Naive thymus-derived CD4-positive, alpha-beta T cell (primary cell): ENCODE measurements at regions of chr4 and their contacts with region 1.

Region 1: DNA sequence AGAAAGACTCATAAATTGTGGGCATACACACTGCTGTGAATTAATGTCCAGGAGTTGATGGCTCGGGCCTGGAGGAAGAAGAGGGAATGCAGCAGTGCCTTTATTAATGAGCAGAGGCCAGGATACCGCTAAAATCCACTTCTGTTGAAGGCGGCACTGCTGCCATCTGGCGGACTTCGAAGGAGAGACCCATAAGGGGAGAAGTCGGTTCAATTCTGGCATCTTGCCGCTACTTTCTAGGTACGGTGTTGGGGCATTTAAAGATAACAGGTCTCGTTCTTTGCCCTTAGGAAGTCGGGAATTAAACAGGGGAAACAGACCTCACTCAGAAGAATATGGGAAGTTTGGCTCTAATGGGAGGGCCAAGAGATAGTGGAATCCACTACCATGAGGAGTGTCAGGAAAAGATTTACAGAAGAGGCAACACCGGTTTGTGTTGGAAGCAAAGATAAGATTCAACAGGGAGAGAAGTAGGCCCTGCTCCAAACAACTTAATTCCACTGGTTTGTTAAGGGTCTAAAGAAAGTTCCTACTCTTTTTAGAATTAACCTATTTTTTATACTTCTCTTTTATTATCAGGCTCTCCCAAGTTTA is 133.6 kb upstream of the GIMD1 start:
- DNase-seq: peak in 4 of 9 donors; percentile 1 to 28 (median 8)
- ATAC-seq: peak; percentile 46
- H3K4me3 ChIP-seq: no peak overlapping the region
- H3K4me3 Mint-ChIP-seq: no peak overlapping the region
- H3K27ac ChIP-seq: no peak overlapping the region
- H3K27ac Mint-ChIP-seq: no peak overlapping the region
- H3K4me1 ChIP-seq: no peaks in the 10 kb centered on the region
- H3K4me1 Mint-ChIP-seq: peaks cover 0 to 6% (median 0%) of the 10 kb centered on the region in 7 donors
- H3K27me3 ChIP-seq: no peaks in the 10 kb centered on the region
- H3K27me3 Mint-ChIP-seq: peaks cover 11 to 37% (median 22%) of the 10 kb centered on the region in 5 donors

Region 2: DNA sequence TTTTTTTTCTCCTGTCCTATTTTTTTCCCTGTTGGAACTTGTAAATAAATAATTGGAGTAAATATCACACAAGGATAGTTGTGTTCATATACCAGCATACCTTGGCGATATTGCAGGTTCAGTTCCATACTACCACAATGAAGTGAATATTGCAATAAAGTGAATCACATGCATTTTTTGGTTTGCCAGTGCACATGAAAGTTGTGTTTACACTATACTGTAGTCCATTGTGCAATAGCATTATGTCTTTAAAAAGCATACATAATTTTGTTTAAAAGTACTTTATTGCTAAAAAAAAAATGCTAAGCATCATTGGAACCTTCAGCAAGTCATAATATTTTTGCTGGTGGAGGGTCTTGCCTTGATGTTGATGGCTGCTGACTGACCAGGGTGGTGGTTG is 705.0 kb before region 1 on chr4:
- CTCF ChIA-PET with region 1: no interaction called
- POLR2A ChIA-PET with region 1: no interaction called
- intact Hi-C with region 1: no loop called
- DNase-seq: no peak
- ATAC-seq: no peak
- H3K4me3 ChIP-seq: no peak overlapping the region
- H3K4me3 Mint-ChIP-seq: no peak overlapping the region
- H3K27ac ChIP-seq: no peak overlapping the region
- H3K27ac Mint-ChIP-seq: no peak overlapping the region
- H3K4me1 ChIP-seq: no peaks in the 10 kb centered on the region
- H3K4me1 Mint-ChIP-seq: no peaks in the 10 kb centered on the region
- H3K27me3 ChIP-seq: no peaks in the 10 kb centered on the region
- H3K27me3 Mint-ChIP-seq: no peaks in the 10 kb centered on the region

Region 3: GRCh38 chr4:106238820-106239420 is 263.3 kb before region 1 on chr4:
- CTCF ChIA-PET with region 1: no interaction called
- POLR2A ChIA-PET with region 1: no interaction called
- intact Hi-C with region 1: loop called (anchors 1 kb)
- DNase-seq: peak in 3 of 9 donors; percentile 1 to 16 (median 5)
- ATAC-seq: peak; percentile 51
- H3K4me3 ChIP-seq: no peak overlapping the region
- H3K4me3 Mint-ChIP-seq: no peak overlapping the region
- H3K27ac ChIP-seq: no peak overlapping the region
- H3K27ac Mint-ChIP-seq: no peak overlapping the region
- H3K4me1 ChIP-seq: no peaks in the 10 kb centered on the region
- H3K4me1 Mint-ChIP-seq: no peaks in the 10 kb centered on the region
- H3K27me3 ChIP-seq: no peaks in the 10 kb centered on the region
- H3K27me3 Mint-ChIP-seq: no peaks in the 10 kb centered on the region

Region 4: GRCh38 chr4:106369456-106370060 is 132.6 kb before region 1 on chr4:
- CTCF ChIA-PET with region 1: no interaction called
- POLR2A ChIA-PET with region 1: no interaction called
- intact Hi-C with region 1: loop called in 1 of 2 experiments (anchors 1 kb)
- DNase-seq: peak in 5 of 9 donors; percentile 1 to 28 (median 1)
- ATAC-seq: peak; percentile 60
- H3K4me3 ChIP-seq: no peak overlapping the region
- H3K4me3 Mint-ChIP-seq: no peak overlapping the region
- H3K27ac ChIP-seq: no peak overlapping the region
- H3K27ac Mint-ChIP-seq: no peak overlapping the region
- H3K4me1 ChIP-seq: no peaks in the 10 kb centered on the region
- H3K4me1 Mint-ChIP-seq: peaks cover 0 to 5% (median 0%) of the 10 kb centered on the region in 7 donors
- H3K27me3 ChIP-seq: no peaks in the 10 kb centered on the region
- H3K27me3 Mint-ChIP-seq: peaks cover 19 to 31% (median 24%) of the 10 kb centered on the region in 5 donors

Region 5: GRCh38 chr4:106618956-106619355 is 116.8 kb after region 1 on chr4:
- CTCF ChIA-PET with region 1: no interaction called
- POLR2A ChIA-PET with region 1: no interaction called
- intact Hi-C with region 1: no loop called
- DNase-seq: no peak
- ATAC-seq: no peak
- H3K4me3 ChIP-seq: no peak overlapping the region
- H3K4me3 Mint-ChIP-seq: no peak overlapping the region
- H3K27ac ChIP-seq: no peak overlapping the region
- H3K27ac Mint-ChIP-seq: no peak overlapping the region
- H3K4me1 ChIP-seq: no peaks in the 10 kb centered on the region
- H3K4me1 Mint-ChIP-seq: no peaks in the 10 kb centered on the region
- H3K27me3 ChIP-seq: no peaks in the 10 kb centered on the region
- H3K27me3 Mint-ChIP-seq: peaks cover 0 to 4% (median 0%) of the 10 kb centered on the region in 5 donors

Region 6: GRCh38 chr4:107094332-107094731 is 592.1 kb after region 1 on chr4:
- CTCF ChIA-PET with region 1: no interaction called
- POLR2A ChIA-PET with region 1: no interaction called
- intact Hi-C with region 1: no loop called
- DNase-seq: no peak
- ATAC-seq: peak; percentile 40
- H3K4me3 ChIP-seq: no peak overlapping the region
- H3K4me3 Mint-ChIP-seq: no peak overlapping the region
- H3K27ac ChIP-seq: no peak overlapping the region
- H3K27ac Mint-ChIP-seq: no peak overlapping the region
- H3K4me1 ChIP-seq: no peaks in the 10 kb centered on the region
- H3K4me1 Mint-ChIP-seq: no peaks in the 10 kb centered on the region
- H3K27me3 ChIP-seq: no peaks in the 10 kb centered on the region
- H3K27me3 Mint-ChIP-seq: peaks cover 0 to 5% (median 0%) of the 10 kb centered on the region in 5 donors